ENCODE measurements at regions of chr7 and their contacts with region 1.

Region 1: DNA sequence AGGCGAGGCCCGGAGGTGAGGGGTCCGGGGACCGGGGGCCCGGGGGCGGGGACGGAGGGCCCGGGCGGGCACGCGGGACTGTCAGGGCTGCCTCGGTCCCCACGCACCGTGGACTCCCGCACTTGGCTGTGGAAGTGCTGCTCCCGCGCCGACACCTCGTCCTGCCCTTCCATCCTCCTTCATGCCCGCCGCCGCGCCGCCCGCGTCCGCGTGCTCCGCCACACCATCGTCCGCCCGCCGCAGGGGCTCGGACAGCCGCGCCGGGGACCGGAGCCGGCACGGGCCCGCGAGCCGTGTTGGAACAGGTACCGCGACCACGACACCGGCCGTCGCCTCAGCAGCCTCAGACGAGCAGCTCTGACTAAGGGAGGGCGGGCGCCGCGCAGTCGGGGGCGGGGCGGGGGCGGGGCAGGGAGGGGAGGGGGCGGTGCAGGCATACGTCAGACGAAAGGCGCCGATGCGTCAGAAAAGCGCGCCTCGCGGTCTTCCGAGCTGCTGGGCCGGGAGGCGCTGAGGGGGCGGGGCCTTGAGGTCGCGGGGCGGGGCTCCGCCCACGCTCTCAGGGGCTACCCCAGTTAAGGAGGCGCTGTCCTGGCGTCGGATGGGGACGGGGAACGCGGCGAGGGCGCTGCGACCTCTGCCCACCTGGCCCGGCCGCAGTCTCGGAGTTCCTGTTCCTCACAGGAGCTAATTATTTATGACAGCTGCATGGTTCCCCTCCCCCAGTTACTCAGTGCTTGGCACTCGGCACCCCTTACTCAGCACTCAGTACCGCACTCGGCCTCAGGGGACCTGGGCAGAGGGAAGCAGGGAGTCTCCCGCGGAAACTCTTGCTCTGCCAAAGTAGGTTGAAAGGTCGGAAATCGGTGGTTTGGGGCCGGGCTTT is at the start of gene LMBR1:
- DNase-seq: peak; percentile 93
- H3K4me3 Mint-ChIP-seq: peak within 1 kb of the TSS; percentile 89
- H3K27ac Mint-ChIP-seq: peak within 1 kb of the TSS; percentile 92
- H3K4me1 Mint-ChIP-seq: peaks cover 34% of the 10 kb centered on the region
- H3K27me3 Mint-ChIP-seq: no peaks in the 10 kb centered on the region
- total RNA-seq, gene LMBR1: 25.2 to 33.8 TPM

Region 2: GRCh38 chr7:155804897-155805825 is 1087.9 kb before region 1 on chr7:
- CTCF ChIA-PET with region 1: no interaction called
- intact Hi-C with region 1: loop called (anchors 5 kb)
- DNase-seq: peak; percentile 65
- H3K4me3 Mint-ChIP-seq: peak overlapping the region; percentile 17
- H3K27ac Mint-ChIP-seq: no peak overlapping the region
- H3K4me1 Mint-ChIP-seq: peaks cover 25% of the 10 kb centered on the region
- H3K27me3 Mint-ChIP-seq: peaks cover 54% of the 10 kb centered on the region

Region 3: DNA sequence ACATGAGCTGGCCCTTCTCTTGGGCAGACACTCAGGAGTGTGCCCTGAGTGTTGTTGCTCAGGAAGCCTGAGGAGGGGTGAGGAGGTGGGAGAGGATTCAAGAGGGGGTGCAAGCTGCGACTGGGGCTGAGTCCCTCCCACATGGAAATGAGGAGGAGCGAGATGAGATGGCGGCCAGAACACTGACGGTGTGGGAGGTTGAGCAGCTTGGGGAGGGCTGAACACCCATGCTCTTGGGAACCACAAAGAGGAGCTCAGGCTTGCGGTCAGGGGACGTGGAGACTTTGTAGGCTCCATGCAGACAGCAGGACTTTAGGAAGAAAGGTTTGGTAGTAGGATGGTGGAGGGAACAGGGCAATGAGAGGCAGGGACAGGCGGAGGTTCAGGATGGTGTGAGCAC is 917.6 kb before region 1 on chr7:
- CTCF ChIA-PET with region 1: no interaction called
- intact Hi-C with region 1: no loop called
- DNase-seq: no peak
- H3K4me3 Mint-ChIP-seq: no peak overlapping the region
- H3K27ac Mint-ChIP-seq: no peak overlapping the region
- H3K4me1 Mint-ChIP-seq: no peaks in the 10 kb centered on the region
- H3K27me3 Mint-ChIP-seq: peaks cover 2% of the 10 kb centered on the region

Region 4: GRCh38 chr7:156773966-156774365 is 119.1 kb before region 1 on chr7:
- CTCF ChIA-PET with region 1: no interaction called
- intact Hi-C with region 1: loop called (anchors 5 kb)
- DNase-seq: no peak
- H3K4me3 Mint-ChIP-seq: no peak overlapping the region
- H3K27ac Mint-ChIP-seq: no peak overlapping the region
- H3K4me1 Mint-ChIP-seq: peaks cover 28% of the 10 kb centered on the region
- H3K27me3 Mint-ChIP-seq: no peaks in the 10 kb centered on the region

Region 5: GRCh38 chr7:156949541-156950380 is 56.7 kb after region 1 on chr7 and contains the start of gene NOM1:
- CTCF ChIA-PET with region 1: interaction called, 4 read pairs
- intact Hi-C with region 1: loop called (anchors 1 kb)
- DNase-seq: peak; percentile 92
- H3K4me3 Mint-ChIP-seq: peak within 1 kb of the TSS; percentile 90
- H3K27ac Mint-ChIP-seq: peak within 1 kb of the TSS; percentile 53
- H3K4me1 Mint-ChIP-seq: peaks cover 37% of the 10 kb centered on the region
- H3K27me3 Mint-ChIP-seq: peaks cover 12% of the 10 kb centered on the region
- total RNA-seq, gene NOM1: 26.0 to 28.3 TPM

Region 6: DNA sequence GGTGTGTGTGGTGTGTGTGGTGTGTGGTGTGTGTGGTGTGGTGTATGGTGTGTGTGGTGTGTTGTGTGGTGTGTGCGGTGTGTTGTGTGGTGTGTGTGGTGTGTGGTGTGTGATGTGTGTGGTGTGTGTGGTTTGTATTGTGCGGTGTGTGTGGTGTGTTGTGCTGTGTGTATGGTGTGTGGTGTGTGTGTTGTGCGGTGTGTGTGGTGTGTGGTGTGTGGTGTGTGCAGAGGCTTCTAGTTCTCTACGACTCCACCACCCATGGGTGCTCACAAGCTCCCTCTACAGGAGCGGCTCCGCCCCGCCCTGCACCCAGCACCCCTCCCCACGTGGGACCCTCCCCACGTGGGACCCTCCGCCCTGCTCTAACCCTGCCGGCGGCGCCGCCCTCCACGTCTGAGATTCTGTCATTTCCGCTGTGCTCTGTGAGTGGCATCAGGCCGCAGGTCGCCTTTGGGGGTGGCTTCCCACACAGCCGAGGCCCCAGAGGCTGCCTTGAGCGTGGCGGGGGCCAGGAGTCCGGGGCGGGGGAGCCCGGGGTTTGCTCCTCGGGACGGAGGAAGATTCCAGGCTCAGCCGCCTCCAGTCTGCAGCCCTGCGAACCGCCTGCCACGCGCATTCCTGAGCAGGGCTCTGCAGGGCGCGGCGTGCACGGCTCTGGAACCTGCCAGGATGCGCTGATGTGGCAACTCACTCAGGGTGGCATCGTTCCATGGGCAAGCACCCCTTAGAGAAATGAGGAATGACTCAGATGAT is 406.7 kb after region 1 on chr7:
- CTCF ChIA-PET with region 1: no interaction called
- intact Hi-C with region 1: loop called (anchors 1 kb)
- DNase-seq: no peak
- H3K4me3 Mint-ChIP-seq: no peak overlapping the region
- H3K27ac Mint-ChIP-seq: no peak overlapping the region
- H3K4me1 Mint-ChIP-seq: peaks cover 32% of the 10 kb centered on the region
- H3K27me3 Mint-ChIP-seq: no peaks in the 10 kb centered on the region

Measured in activated naive CD4-positive, alpha-beta T cell treated with anti-CD3 and anti-CD28 coated beads for 36 hours (primary cell).